ENCODE measurements at regions of chr12 and their contacts with region 1.

Region 1: DNA sequence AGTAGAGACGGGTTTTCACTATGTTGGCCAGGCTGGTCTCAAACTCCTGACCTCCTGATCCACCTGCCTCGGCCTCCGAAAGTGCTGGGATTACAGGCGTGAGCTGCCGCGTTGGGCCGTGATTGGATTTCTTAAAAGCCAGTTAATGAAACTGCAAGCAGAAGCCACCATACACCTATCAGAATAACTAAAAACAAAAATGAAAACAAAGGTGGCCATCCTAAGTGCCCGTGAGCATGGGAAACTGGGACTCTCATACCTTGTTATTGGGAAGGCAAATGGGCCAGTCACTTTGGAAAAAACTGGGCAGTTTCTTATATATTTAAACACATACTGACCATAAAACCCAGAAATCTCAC is 7.7 kb upstream of the TCTN1 start:
- DNase-seq: no peak
- ATAC-seq: peak; percentile 57
- H3K4me3 ChIP-seq: peak overlapping the region; percentile 63
- H3K27ac ChIP-seq: peak overlapping the region; percentile 86
- H3K4me1 ChIP-seq: peaks cover 20% of the 10 kb centered on the region
- H3K27me3 ChIP-seq: no peaks in the 10 kb centered on the region
- CTCF ChIP-seq: no peak
- EP300 ChIP-seq: no peak
- POLR2A ChIP-seq: no peak
- RAD21 ChIP-seq: no peak

Region 2: DNA sequence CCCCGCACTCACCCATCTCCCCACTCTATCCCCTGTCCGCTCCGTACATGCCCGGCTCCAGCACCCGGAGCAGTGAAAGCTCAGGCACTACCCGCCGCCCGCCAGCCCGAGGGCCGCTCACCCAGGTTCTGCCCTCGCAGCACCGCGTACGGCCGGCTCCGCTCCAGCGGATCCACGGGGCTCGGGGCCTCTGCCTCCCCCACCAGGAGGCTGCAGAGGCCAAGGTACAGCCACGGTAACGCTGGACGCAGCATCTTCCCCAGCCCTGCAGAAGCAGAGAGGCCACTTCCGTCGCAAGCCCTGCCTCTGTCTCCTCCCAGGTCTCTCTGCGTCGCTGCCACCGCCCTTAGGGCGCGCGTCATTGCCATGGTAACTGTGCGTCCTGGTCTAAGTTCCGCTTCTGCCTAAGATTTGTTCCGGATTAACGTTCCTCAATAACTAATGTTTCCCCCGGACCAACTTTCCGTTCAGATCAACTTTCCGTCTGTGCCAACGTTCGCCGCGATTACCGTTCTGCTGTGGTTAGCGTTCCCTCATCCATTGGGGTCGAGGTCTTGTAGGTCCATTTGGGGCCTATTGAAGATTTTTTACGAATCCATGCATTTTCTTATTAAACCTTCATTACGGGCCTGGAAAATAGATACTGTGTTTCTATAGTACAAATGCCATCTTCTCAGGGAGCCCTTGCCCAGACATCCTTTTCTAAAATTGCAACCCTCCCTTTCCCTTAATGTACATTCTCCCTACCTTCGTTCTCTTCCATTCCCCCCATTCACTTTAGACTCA is 557.8 kb before region 1 on chr12 and contains the start of gene C12orf76:
- CTCF ChIA-PET with region 1: no interaction called
- POLR2A ChIA-PET with region 1: no interaction called
- RAD21 ChIA-PET with region 1: no interaction called
- SMC1A ChIA-PET with region 1: no interaction called
- in situ Hi-C with region 1: no loop called
- intact Hi-C with region 1: no loop called
- DNase-seq: peak; percentile 96
- ATAC-seq: peak; percentile 99
- H3K4me3 ChIP-seq: peak within 1 kb of the TSS; percentile 87
- H3K27ac ChIP-seq: peak within 1 kb of the TSS; percentile 77
- H3K4me1 ChIP-seq: peaks cover 29% of the 10 kb centered on the region
- H3K27me3 ChIP-seq: no peaks in the 10 kb centered on the region
- CTCF ChIP-seq: peak; percentile 9 to 27 (median 13); a peak in 2 of 6 replicates
- EP300 ChIP-seq: no peak
- POLR2A ChIP-seq: peak; percentile 82
- RAD21 ChIP-seq: peak; percentile 32; the same call in 1 of the 2 replicates
- polyA plus RNA-seq, gene C12orf76: 3.6 to 4.6 TPM

Region 3: DNA sequence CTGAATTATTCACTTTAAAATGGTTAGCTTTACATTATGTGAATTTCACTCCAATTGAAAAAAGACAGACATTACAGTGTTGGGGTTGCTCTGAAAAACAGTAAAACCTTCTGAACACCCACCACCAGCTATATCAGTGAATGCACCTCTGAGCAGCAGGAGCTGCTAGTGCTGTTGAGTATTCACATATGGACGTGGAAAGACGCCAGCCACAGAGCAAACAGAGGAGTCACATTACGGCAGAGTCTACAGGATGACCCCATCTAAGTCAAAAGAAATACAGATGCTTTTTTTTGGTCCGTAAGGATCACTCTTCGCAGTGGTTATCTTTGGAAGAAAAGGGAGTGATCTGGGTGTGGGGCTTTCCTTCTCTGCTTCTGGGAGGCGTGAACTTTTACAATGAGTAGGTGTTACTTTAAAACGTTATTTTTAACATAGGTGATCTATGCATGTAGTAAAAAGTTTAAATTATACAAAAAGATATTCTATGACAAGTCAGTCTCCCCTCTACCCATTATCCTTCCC is 78.1 kb after region 1 on chr12:
- CTCF ChIA-PET with region 1: interaction called, 5 read pairs
- POLR2A ChIA-PET with region 1: interaction called, 6 read pairs
- RAD21 ChIA-PET with region 1: interaction called, 5 read pairs
- SMC1A ChIA-PET with region 1: interaction called, 10 read pairs
- in situ Hi-C with region 1: no loop called
- intact Hi-C with region 1: no loop called
- DNase-seq: no peak
- ATAC-seq: peak; percentile 2; the same call in 2 of the 3 replicates
- H3K4me3 ChIP-seq: peak overlapping the region; percentile 90
- H3K27ac ChIP-seq: peak overlapping the region; percentile 68
- H3K4me1 ChIP-seq: peaks cover 29% of the 10 kb centered on the region
- H3K27me3 ChIP-seq: no peaks in the 10 kb centered on the region
- CTCF ChIP-seq: no peak
- EP300 ChIP-seq: 0 out of 4 replicates have a peak, but pooled peaks of 1 of the 2 experiments have one; percentile 13
- POLR2A ChIP-seq: no peak
- RAD21 ChIP-seq: no peak

Measured in GM12878 (cell line).